ENCODE measurements at regions of chr2 and their contacts with region 1.

Region 1: DNA sequence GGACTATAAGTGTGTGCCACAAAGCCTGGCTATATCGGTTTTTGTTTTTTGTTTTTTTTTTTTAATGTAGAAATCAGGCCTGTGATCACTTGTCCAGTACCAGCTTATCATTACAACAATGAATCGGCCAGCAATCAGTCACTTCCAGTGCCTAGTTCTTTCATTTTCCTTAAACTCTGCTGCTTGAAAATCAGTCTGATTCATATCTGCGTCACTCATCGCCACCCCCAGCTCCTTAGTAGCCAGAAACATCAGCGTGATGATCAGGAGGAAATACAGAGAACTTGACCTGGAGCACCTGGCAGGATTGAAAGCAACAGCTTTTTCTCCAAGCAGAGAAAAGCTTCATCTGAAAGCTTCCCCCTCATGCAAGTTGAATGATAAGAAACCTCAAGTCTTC is 75.4 kb downstream of the SPTBN1 start:
- DNase-seq: no peak
- ATAC-seq: no peak
- H3K4me3 ChIP-seq: no peak overlapping the region
- H3K27ac ChIP-seq: peak overlapping the region; percentile 39
- H3K4me1 ChIP-seq: peaks cover 60% of the 10 kb centered on the region
- H3K27me3 ChIP-seq: no peaks in the 10 kb centered on the region
- CTCF ChIP-seq: no peak
- EP300 ChIP-seq: no peak
- POLR2A ChIP-seq: no peak
- RAD21 ChIP-seq: no peak

Region 2: GRCh38 chr2:54545702-54546450 is 14.3 kb after region 1 on chr2:
- CTCF ChIA-PET with region 1: no interaction called
- POLR2A ChIA-PET with region 1: interaction called, 7 read pairs
- in situ Hi-C with region 1: no loop called
- intact Hi-C with region 1: loop called (anchors 1 kb)
- DNase-seq: peak; percentile 97
- ATAC-seq: peak; percentile 99
- H3K4me3 ChIP-seq: peak overlapping the region in 2 of 3 experiments; percentile 9 to 19; a peak in 3 of 6 replicates
- H3K27ac ChIP-seq: peak overlapping the region; percentile 80
- H3K4me1 ChIP-seq: peaks cover 72% of the 10 kb centered on the region
- H3K27me3 ChIP-seq: no peaks in the 10 kb centered on the region
- CTCF ChIP-seq: 0 out of 2 replicates have a peak, but pooled peaks have one; percentile 1
- EP300 ChIP-seq: peak; percentile 92 to 95
- POLR2A ChIP-seq: peak in 1 of 2 experiments; percentile 35; a peak in 1 of 4 replicates
- RAD21 ChIP-seq: no peak

Region 3: DNA sequence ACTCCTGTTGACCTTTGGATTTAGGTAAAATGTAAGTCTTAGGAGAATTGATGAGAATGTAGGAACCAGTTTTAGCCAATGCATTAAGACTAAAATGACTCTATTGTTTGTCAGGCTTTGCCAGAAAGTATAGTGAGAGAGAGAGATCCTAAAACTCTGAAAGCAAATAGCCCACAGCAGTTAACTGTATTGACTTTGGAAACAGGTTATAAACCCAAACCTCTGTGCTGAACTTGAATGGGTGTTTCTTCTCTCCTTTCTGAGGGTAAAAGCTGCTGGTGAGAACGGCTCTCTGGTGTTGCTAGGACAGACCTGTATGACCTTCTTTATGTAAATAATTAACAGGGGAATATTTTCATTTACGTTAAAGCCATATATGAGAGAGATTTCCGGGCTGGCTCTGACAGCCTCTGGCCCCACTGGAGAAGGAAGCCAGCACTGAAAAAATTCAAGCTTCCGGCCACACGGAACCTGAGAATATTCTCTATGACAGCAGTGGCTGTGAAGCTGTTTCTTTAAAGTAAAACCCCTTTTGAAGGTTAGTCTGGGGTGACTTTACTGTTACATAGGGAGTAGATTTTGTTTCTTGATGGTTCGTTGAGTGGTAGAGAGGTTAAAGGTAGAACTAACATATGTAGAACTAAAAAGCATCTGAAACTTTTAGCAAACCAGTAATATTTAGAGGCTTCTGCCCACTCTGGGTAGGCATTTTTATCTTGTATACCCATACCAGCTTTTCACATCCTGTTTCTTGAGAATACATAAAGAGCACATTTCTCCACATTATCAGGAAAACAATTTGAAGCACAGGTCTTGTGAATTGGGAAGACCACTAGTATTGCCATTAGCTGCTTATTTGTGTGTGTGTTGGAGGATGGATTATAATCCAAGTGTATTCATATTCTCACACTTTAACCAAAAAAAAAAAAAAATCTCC is 48.4 kb after region 1 on chr2:
- CTCF ChIA-PET with region 1: no interaction called
- POLR2A ChIA-PET with region 1: interaction called, 10 read pairs
- in situ Hi-C with region 1: no loop called
- intact Hi-C with region 1: loop called (anchors 5 kb)
- DNase-seq: peak; percentile 97
- ATAC-seq: peak; percentile 89
- H3K4me3 ChIP-seq: peak overlapping the region; percentile 27 to 51 (median 40); a peak in 4 of 6 replicates
- H3K27ac ChIP-seq: peak overlapping the region; percentile 80
- H3K4me1 ChIP-seq: peaks cover 100% of the 10 kb centered on the region
- H3K27me3 ChIP-seq: no peaks in the 10 kb centered on the region
- CTCF ChIP-seq: no peak
- EP300 ChIP-seq: peak in 1 of 2 experiments; percentile 84; a peak in 2 of 4 replicates
- POLR2A ChIP-seq: peak in 1 of 2 experiments; percentile 53; a peak in 1 of 4 replicates
- RAD21 ChIP-seq: no peak

Region 4: GRCh38 chr2:54657664-54658083 is 126.1 kb after region 1 on chr2:
- CTCF ChIA-PET with region 1: no interaction called
- POLR2A ChIA-PET with region 1: no interaction called
- in situ Hi-C with region 1: no loop called
- intact Hi-C with region 1: no loop called
- DNase-seq: peak; percentile 62
- ATAC-seq: peak; percentile 79
- H3K4me3 ChIP-seq: no peak overlapping the region
- H3K27ac ChIP-seq: no peak overlapping the region
- H3K4me1 ChIP-seq: peaks cover 12% of the 10 kb centered on the region
- H3K27me3 ChIP-seq: no peaks in the 10 kb centered on the region
- CTCF ChIP-seq: peak; percentile 85
- EP300 ChIP-seq: no peak
- POLR2A ChIP-seq: no peak
- RAD21 ChIP-seq: peak; percentile 57

Region 5: GRCh38 chr2:54871457-54872107 is 340.0 kb after region 1 on chr2:
- CTCF ChIA-PET with region 1: no interaction called
- POLR2A ChIA-PET with region 1: no interaction called
- in situ Hi-C with region 1: no loop called
- intact Hi-C with region 1: no loop called
- DNase-seq: peak; percentile 73
- ATAC-seq: peak; percentile 53
- H3K4me3 ChIP-seq: no peak overlapping the region
- H3K27ac ChIP-seq: no peak overlapping the region
- H3K4me1 ChIP-seq: peaks cover 21% of the 10 kb centered on the region
- H3K27me3 ChIP-seq: no peaks in the 10 kb centered on the region
- CTCF ChIP-seq: no peak
- EP300 ChIP-seq: no peak
- POLR2A ChIP-seq: no peak
- RAD21 ChIP-seq: no peak

Measured in HepG2 (cell line).